ENCODE measurements at regions of chr20 and their contacts with region 1.

Region 1: GRCh38 chr20:3820048-3820900 is at the start of gene AP5S1:
- DNase-seq: peak; percentile 99
- H3K4me3 ChIP-seq: peak within 1 kb of the TSS; percentile 67 to 85
- H3K27ac ChIP-seq: peak within 1 kb of the TSS; percentile 99
- H3K4me1 ChIP-seq: peaks cover 22% of the 10 kb centered on the region
- H3K27me3 ChIP-seq: no peaks in the 10 kb centered on the region
- CTCF ChIP-seq: peak; percentile 98 to 99 (median 99)
- POLR2A ChIP-seq: peak; percentile 24
- total RNA-seq, gene AP5S1: 25.9 to 26.6 TPM

Region 2: GRCh38 chr20:3786665-3787323 is 33.5 kb before region 1 on chr20 and contains the start of gene CENPB:
- intact Hi-C with region 1: loop called (anchors 2 kb)
- DNase-seq: peak; percentile 91
- H3K4me3 ChIP-seq: peak within 1 kb of the TSS; percentile 58 to 63
- H3K27ac ChIP-seq: peak within 1 kb of the TSS; percentile 42 to 74
- H3K4me1 ChIP-seq: peaks cover 29% of the 10 kb centered on the region
- H3K27me3 ChIP-seq: no peaks in the 10 kb centered on the region
- CTCF ChIP-seq: peak; percentile 43 to 83 (median 76)
- POLR2A ChIP-seq: no peak
- total RNA-seq, gene CENPB: 32.2 to 44.1 TPM

Region 3: GRCh38 chr20:4102381-4102780 is 282.1 kb after region 1 on chr20:
- intact Hi-C with region 1: no loop called
- DNase-seq: no peak
- H3K4me3 ChIP-seq: no peak overlapping the region
- H3K27ac ChIP-seq: no peak overlapping the region
- H3K4me1 ChIP-seq: no peaks in the 10 kb centered on the region
- H3K27me3 ChIP-seq: no peaks in the 10 kb centered on the region
- CTCF ChIP-seq: no peak
- POLR2A ChIP-seq: no peak

Measured in testis (tissue), 5 donors.